PC-3 (cell line): ENCODE measurements at regions of chr1 and their contacts with region 1.

Region 1: GRCh38 chr1:212070720-212071302 is 35.3 kb downstream of the DTL start:
- DNase-seq: peak; percentile 76
- ATAC-seq: peak; percentile 99
- H3K4me3 ChIP-seq: no peak overlapping the region
- H3K27ac ChIP-seq: no peak overlapping the region
- H3K4me1 ChIP-seq: no peaks in the 10 kb centered on the region
- H3K27me3 ChIP-seq: no peaks in the 10 kb centered on the region
- CTCF ChIP-seq: peak; percentile 98

Region 2: GRCh38 chr1:211680752-211681327 is 390.0 kb before region 1 on chr1:
- CTCF ChIA-PET with region 1: interaction called, 10 read pairs
- POLR2A ChIA-PET with region 1: no interaction called
- intact Hi-C with region 1: loop called (anchors 2 kb)
- DNase-seq: peak; percentile 94
- ATAC-seq: peak; percentile 90
- H3K4me3 ChIP-seq: no peak overlapping the region
- H3K27ac ChIP-seq: no peak overlapping the region
- H3K4me1 ChIP-seq: peaks cover 7% of the 10 kb centered on the region; the same call in 1 of the 2 replicates
- H3K27me3 ChIP-seq: no peaks in the 10 kb centered on the region
- CTCF ChIP-seq: peak; percentile 91

Region 3: GRCh38 chr1:211975152-211975941 is 95.5 kb before region 1 on chr1:
- CTCF ChIA-PET with region 1: no interaction called
- POLR2A ChIA-PET with region 1: no interaction called
- intact Hi-C with region 1: no loop called
- DNase-seq: no peak
- ATAC-seq: no peak
- H3K4me3 ChIP-seq: no peak overlapping the region
- H3K27ac ChIP-seq: no peak overlapping the region
- H3K4me1 ChIP-seq: no peaks in the 10 kb centered on the region
- H3K27me3 ChIP-seq: no peaks in the 10 kb centered on the region
- CTCF ChIP-seq: no peak

Region 4: DNA sequence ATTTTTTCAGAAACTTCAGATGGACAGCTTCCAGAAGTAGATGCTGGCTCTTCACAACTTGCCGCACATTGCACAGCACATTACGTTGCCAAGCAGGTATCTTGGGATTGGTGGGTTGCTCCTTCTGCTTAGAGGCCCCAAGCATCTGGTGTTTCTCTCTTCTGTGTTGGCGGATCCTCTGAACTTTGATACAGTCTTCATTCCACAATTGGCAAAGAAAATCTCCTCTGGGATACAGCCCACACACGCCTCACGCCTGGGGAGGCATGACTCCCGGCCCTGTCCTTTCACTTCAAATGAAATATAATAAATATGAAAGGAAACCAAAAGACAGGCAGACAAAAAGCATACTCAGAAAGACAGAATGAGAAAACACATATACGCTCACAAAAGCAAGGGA is 142.1 kb after region 1 on chr1:
- CTCF ChIA-PET with region 1: no interaction called
- POLR2A ChIA-PET with region 1: interaction called, 19 read pairs
- intact Hi-C with region 1: no loop called
- DNase-seq: no peak
- ATAC-seq: no peak
- H3K4me3 ChIP-seq: no peak overlapping the region
- H3K27ac ChIP-seq: no peak overlapping the region
- H3K4me1 ChIP-seq: no peaks in the 10 kb centered on the region
- H3K27me3 ChIP-seq: peaks cover 7% of the 10 kb centered on the region; the same call in 1 of the 2 replicates
- CTCF ChIP-seq: no peak

Region 5: GRCh38 chr1:212229654-212230053 is 158.8 kb after region 1 on chr1:
- CTCF ChIA-PET with region 1: interaction called, 12 read pairs
- POLR2A ChIA-PET with region 1: no interaction called
- intact Hi-C with region 1: loop called (anchors 2 kb)
- DNase-seq: peak; percentile 50
- ATAC-seq: peak; percentile 69
- H3K4me3 ChIP-seq: no peak overlapping the region
- H3K27ac ChIP-seq: no peak overlapping the region
- H3K4me1 ChIP-seq: peaks cover 5% of the 10 kb centered on the region
- H3K27me3 ChIP-seq: peaks cover 9% of the 10 kb centered on the region; the same call in 1 of the 2 replicates
- CTCF ChIP-seq: no peak

Region 6: GRCh38 chr1:212291505-212292134 is 220.8 kb after region 1 on chr1:
- CTCF ChIA-PET with region 1: interaction called, 19 read pairs
- POLR2A ChIA-PET with region 1: interaction called, 4 read pairs
- intact Hi-C with region 1: loop called (anchors 1 kb)
- DNase-seq: peak; percentile 84
- ATAC-seq: peak; percentile 52
- H3K4me3 ChIP-seq: no peak overlapping the region
- H3K27ac ChIP-seq: no peak overlapping the region
- H3K4me1 ChIP-seq: peaks cover 45% of the 10 kb centered on the region
- H3K27me3 ChIP-seq: no peaks in the 10 kb centered on the region
- CTCF ChIP-seq: peak; percentile 99

Region 7: DNA sequence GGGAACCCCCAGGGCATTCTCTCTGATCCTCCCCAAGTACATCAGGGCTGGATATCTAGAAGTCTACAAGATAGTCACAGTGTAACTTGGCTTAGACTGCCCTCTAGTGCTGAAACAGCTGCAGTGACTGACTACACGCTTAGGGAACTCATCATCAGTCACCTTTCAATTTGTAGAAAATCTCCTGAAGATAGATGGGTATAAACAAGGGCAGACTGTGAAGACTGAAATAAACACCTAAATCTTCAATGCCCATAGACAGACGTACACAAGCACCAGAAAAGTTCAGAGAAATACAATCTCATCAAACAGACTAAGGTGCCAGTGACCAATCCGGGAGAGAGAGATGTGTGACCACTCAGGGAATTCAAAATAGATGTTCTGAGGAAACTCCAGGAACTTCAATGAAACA is 297.3 kb after region 1 on chr1:
- CTCF ChIA-PET with region 1: interaction called, 9 read pairs
- POLR2A ChIA-PET with region 1: no interaction called
- intact Hi-C with region 1: loop called (anchors 1 kb)
- DNase-seq: peak; percentile 94
- ATAC-seq: peak; percentile 99
- H3K4me3 ChIP-seq: no peak overlapping the region
- H3K27ac ChIP-seq: no peak overlapping the region
- H3K4me1 ChIP-seq: no peaks in the 10 kb centered on the region
- H3K27me3 ChIP-seq: no peaks in the 10 kb centered on the region
- CTCF ChIP-seq: peak; percentile 99